T-cell (primary cell): ENCODE measurements at regions of chr16 and their contacts with region 1.

Region 1: DNA sequence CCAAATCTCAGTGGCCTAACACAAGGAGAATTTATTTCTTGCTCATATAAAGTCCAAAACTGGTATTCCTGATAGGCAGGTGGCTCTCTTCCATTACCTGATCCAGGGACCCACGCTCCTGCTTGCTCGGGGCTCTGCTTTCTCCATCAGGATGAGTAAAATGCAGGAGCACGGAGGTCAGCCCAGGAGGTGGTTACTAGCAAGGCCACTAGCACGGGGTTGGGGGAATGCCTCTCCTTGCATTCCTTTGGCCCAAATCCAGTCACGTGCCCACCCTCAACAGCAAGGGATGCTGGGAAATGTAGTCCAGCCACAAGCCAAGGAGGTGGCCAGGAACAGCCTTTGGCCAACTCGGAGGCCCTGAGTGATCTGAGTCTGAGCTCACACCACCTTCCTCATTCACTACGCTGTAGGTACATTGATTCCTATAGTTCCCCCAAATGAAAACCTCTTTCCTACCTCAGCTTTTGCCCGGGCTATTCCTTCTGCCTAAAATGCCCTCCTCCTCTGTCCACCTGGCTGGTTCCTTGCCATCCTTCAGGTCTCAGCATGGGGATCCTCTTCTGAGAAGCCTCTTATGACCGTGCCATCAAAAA is 38.3 kb upstream of the HAPSTR1 start:
- DNase-seq: peak in 1 of 35 experiments; percentile 16
- ATAC-seq: no peak
- H3K4me3 ChIP-seq: no peak overlapping the region
- H3K4me3 Mint-ChIP-seq: no peak overlapping the region
- H3K27ac ChIP-seq: no peak overlapping the region
- H3K27ac Mint-ChIP-seq: no peak overlapping the region
- H3K4me1 ChIP-seq: peaks cover 0 to 1% of the 10 kb centered on the region in 2 experiments
- H3K4me1 Mint-ChIP-seq: peaks cover 0 to 1% (median under 1%) of the 10 kb centered on the region in 3 donors
- H3K27me3 ChIP-seq: peaks cover 0 to 29% of the 10 kb centered on the region in 2 experiments
- H3K27me3 Mint-ChIP-seq: peaks cover 3 to 17% of the 10 kb centered on the region in 2 donors

Region 2: DNA sequence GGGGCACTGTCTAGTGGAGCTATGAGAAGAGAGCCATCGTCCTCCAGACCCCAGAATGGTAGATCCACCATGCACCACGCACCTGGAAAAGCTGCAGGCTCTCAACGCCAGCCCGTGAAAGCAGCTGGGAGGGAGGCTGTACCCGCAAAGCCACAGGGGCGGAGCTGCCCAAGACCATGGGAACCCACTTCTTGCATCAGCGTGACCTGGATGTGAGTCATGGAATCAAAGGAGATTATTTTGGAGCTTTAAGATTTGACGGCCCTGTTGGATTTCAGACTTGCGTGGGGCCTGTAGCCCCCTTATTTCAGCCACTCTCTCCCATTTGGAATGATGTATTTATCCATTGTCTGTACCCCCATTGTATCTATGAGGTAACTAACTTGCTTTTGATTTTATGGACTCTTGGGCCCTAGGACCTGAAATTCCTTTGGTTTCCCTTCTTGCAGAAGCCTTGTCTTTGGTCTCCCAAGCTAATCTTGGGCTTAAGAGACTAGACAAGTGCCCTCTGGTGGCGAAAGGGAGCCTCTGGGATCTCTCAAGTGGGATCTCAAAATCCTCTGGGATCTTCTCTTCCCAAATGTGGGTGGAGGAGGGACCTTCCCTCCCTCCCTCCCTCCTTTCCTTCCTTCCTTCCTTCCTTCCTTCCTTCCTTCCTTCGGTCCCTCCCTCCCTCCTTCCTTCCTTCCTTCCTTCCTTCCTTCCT is 19.8 kb before region 1 on chr16:
- CTCF ChIA-PET with region 1: no interaction called
- POLR2A ChIA-PET with region 1: interaction called in 1 of 2 experiments, 11 read pairs
- DNase-seq: peak in 2 of 35 experiments; percentile 4 to 28
- ATAC-seq: no peak
- H3K4me3 ChIP-seq: no peak overlapping the region
- H3K4me3 Mint-ChIP-seq: no peak overlapping the region
- H3K27ac ChIP-seq: no peak overlapping the region
- H3K27ac Mint-ChIP-seq: no peak overlapping the region
- H3K4me1 ChIP-seq: no peaks in the 10 kb centered on the region
- H3K4me1 Mint-ChIP-seq: no peaks in the 10 kb centered on the region
- H3K27me3 ChIP-seq: no peaks in the 10 kb centered on the region
- H3K27me3 Mint-ChIP-seq: peaks cover 3% of the 10 kb centered on the region in 2 donors

Region 3: DNA sequence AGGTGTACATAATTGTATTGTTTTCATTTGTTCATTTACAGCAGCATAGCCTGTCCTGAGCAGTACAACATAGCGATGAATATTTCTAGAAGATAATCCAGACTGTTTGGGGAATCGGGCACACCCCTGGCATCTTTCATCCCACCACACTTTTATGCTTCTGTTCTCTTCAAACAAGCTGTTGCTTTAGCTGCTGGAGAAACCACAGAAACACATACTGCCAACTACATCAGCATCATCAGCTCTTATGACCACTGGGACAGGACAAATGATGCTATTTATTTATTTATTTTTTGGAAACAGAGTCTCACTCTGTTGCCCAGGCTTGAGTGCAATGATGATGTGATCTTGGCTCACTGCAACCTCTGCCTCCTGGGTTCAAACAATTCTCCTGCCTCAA is 15.8 kb after region 1 on chr16:
- CTCF ChIA-PET with region 1: no interaction called
- POLR2A ChIA-PET with region 1: no interaction called
- DNase-seq: no peak
- ATAC-seq: no peak
- H3K4me3 ChIP-seq: no peak overlapping the region
- H3K4me3 Mint-ChIP-seq: no peak overlapping the region
- H3K27ac ChIP-seq: no peak overlapping the region
- H3K27ac Mint-ChIP-seq: no peak overlapping the region
- H3K4me1 ChIP-seq: no peaks in the 10 kb centered on the region
- H3K4me1 Mint-ChIP-seq: peaks cover 0 to 9% (median 7%) of the 10 kb centered on the region in 3 donors
- H3K27me3 ChIP-seq: no peaks in the 10 kb centered on the region
- H3K27me3 Mint-ChIP-seq: no peaks in the 10 kb centered on the region

Region 4: GRCh38 chr16:9079430-9079812 is 26.3 kb after region 1 on chr16:
- CTCF ChIA-PET with region 1: no interaction called
- POLR2A ChIA-PET with region 1: interaction called in 1 of 2 experiments, 14 read pairs
- DNase-seq: no peak
- ATAC-seq: no peak
- H3K4me3 ChIP-seq: no peak overlapping the region
- H3K4me3 Mint-ChIP-seq: no peak overlapping the region
- H3K27ac ChIP-seq: no peak overlapping the region
- H3K27ac Mint-ChIP-seq: no peak overlapping the region
- H3K4me1 ChIP-seq: no peaks in the 10 kb centered on the region
- H3K4me1 Mint-ChIP-seq: peaks cover 0 to 23% (median 10%) of the 10 kb centered on the region in 3 donors
- H3K27me3 ChIP-seq: peaks cover 0 to 10% of the 10 kb centered on the region in 2 experiments
- H3K27me3 Mint-ChIP-seq: peaks cover 0 to 4% of the 10 kb centered on the region in 2 donors

Region 5: GRCh38 chr16:9123871-9124270 is 70.8 kb after region 1 on chr16:
- CTCF ChIA-PET with region 1: no interaction called
- POLR2A ChIA-PET with region 1: no interaction called
- DNase-seq: peak in 1 of 35 experiments; percentile 43
- ATAC-seq: no peak
- H3K4me3 ChIP-seq: no peak overlapping the region
- H3K4me3 Mint-ChIP-seq: no peak overlapping the region
- H3K27ac ChIP-seq: no peak overlapping the region
- H3K27ac Mint-ChIP-seq: peak overlapping the region in 1 of 2 donors; percentile 27
- H3K4me1 ChIP-seq: peaks cover 0 to 58% of the 10 kb centered on the region in 2 experiments
- H3K4me1 Mint-ChIP-seq: peaks cover 31 to 84% (median 66%) of the 10 kb centered on the region in 3 donors
- H3K27me3 ChIP-seq: no peaks in the 10 kb centered on the region
- H3K27me3 Mint-ChIP-seq: no peaks in the 10 kb centered on the region